HAP-1 (cell line): ENCODE measurements at regions of chr4 and their contacts with region 1.

Region 1: GRCh38 chr4:159206427-159206871 is 103.6 kb downstream of the RAPGEF2 start:
- DNase-seq: no peak
- H3K4me3 ChIP-seq: no peak overlapping the region
- H3K4me1 ChIP-seq: peaks cover 6% of the 10 kb centered on the region
- H3K27me3 ChIP-seq: no peaks in the 10 kb centered on the region

Region 2: GRCh38 chr4:158253350-158253980 is 953.0 kb before region 1 on chr4:
- in situ Hi-C with region 1: loop called (anchors 25 kb)
- DNase-seq: peak; percentile 77
- H3K4me3 ChIP-seq: no peak overlapping the region
- H3K4me1 ChIP-seq: peaks cover 14% of the 10 kb centered on the region
- H3K27me3 ChIP-seq: 0 out of 2 replicates have a peak, but pooled peaks cover 2% of the 10 kb centered on the region

Region 3: GRCh38 chr4:159086611-159087010 is 119.8 kb before region 1 on chr4:
- in situ Hi-C with region 1: no loop called
- DNase-seq: no peak
- H3K4me3 ChIP-seq: no peak overlapping the region
- H3K4me1 ChIP-seq: no peaks in the 10 kb centered on the region
- H3K27me3 ChIP-seq: no peaks in the 10 kb centered on the region

Region 4: DNA sequence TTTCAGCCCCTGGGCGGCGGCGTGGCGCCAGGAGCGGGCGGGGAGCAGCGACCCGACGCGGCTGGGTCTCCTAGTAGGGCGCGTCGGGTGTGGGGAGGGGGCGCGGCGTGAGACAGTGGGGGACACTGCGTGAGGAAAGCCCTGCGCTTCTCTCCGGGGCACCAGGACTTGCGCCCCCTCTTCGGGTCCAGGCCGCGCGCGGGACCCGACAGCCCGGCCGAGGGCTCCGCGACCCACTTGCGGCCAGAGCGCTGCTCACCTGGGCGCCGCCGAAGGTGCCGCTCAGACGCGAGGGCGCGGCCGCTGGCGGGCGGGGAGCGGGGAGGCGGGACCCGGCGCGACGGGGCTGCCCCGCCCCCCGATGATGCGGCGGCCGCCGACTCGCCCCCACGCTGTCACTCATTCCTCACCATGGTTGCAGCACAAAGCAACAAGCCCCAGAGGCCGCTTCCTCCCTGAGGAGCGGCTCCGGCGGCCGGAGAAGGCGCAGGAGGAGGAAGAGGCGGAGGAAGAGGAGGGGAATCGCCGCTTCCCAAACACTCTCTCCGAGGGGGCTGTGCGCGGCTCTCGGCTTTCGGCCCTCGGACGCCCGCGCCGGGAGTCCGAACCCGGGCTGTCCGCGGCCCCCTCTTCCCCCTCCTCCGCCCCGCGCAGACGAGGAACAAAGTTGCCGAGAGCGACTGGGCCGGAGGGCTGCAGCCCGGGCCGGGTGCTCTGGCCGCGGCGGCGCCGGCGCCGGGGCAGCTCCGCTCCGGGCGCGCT is 103.6 kb before region 1 on chr4 and contains the start of gene RAPGEF2:
- in situ Hi-C with region 1: no loop called
- DNase-seq: peak; percentile 86 to 94
- H3K4me3 ChIP-seq: peak within 1 kb of the TSS; percentile 86
- H3K4me1 ChIP-seq: peaks cover 26% of the 10 kb centered on the region
- H3K27me3 ChIP-seq: no peaks in the 10 kb centered on the region

Region 5: GRCh38 chr4:159129814-159130550 is 76.5 kb before region 1 on chr4:
- in situ Hi-C with region 1: no loop called
- DNase-seq: no peak
- H3K4me3 ChIP-seq: no peak overlapping the region
- H3K4me1 ChIP-seq: peaks cover 10% of the 10 kb centered on the region
- H3K27me3 ChIP-seq: no peaks in the 10 kb centered on the region